CD14-positive monocyte (primary cell): ENCODE measurements at regions of chr13 and their contacts with region 1.

Region 1: GRCh38 chr13:99124794-99125316 is 75.8 kb upstream of the UBAC2 start:
- DNase-seq: peak; percentile 18 to 50 (median 38)
- H3K4me3 ChIP-seq: peak overlapping the region in 1 of 3 experiments; percentile 39
- H3K4me3 Mint-ChIP-seq: peak overlapping the region in 1 of 2 donors; percentile 69
- H3K27ac ChIP-seq: no peak overlapping the region
- H3K27ac Mint-ChIP-seq: no peak overlapping the region
- H3K4me1 ChIP-seq: peaks cover 14 to 15% of the 10 kb centered on the region in 2 donors
- H3K4me1 Mint-ChIP-seq: peaks cover 14% of the 10 kb centered on the region
- H3K27me3 ChIP-seq: peaks cover 92 to 100% of the 10 kb centered on the region in 2 donors
- H3K27me3 Mint-ChIP-seq: peaks cover 95 to 98% (median 98%) of the 10 kb centered on the region in 3 donors
- CTCF ChIP-seq: no peak

Region 2: GRCh38 chr13:99033814-99034213 is 91.0 kb before region 1 on chr13:
- intact Hi-C with region 1: loop called in 1 of 2 experiments (anchors 10 kb)
- DNase-seq: no peak
- H3K4me3 ChIP-seq: no peak overlapping the region
- H3K4me3 Mint-ChIP-seq: peak overlapping the region in 1 of 2 donors; percentile 68
- H3K27ac ChIP-seq: no peak overlapping the region
- H3K27ac Mint-ChIP-seq: no peak overlapping the region
- H3K4me1 ChIP-seq: no peaks in the 10 kb centered on the region
- H3K4me1 Mint-ChIP-seq: no peaks in the 10 kb centered on the region
- H3K27me3 ChIP-seq: peaks cover 93 to 100% of the 10 kb centered on the region in 2 donors
- H3K27me3 Mint-ChIP-seq: peaks cover 95 to 97% (median 97%) of the 10 kb centered on the region in 3 donors
- CTCF ChIP-seq: peak; percentile 47